PC-9 (cell line): ENCODE measurements at regions of chr1 and their contacts with region 1.

Region 1: GRCh38 chr1:68074472-68074871 is 24.0 kb upstream of the DIRAS3 start:
- DNase-seq: no peak
- H3K4me3 ChIP-seq: no peak overlapping the region
- H3K27ac ChIP-seq: no peak overlapping the region
- H3K4me1 ChIP-seq: no peaks in the 10 kb centered on the region
- H3K27me3 ChIP-seq: no peaks in the 10 kb centered on the region
- CTCF ChIP-seq: no peak

Region 2: DNA sequence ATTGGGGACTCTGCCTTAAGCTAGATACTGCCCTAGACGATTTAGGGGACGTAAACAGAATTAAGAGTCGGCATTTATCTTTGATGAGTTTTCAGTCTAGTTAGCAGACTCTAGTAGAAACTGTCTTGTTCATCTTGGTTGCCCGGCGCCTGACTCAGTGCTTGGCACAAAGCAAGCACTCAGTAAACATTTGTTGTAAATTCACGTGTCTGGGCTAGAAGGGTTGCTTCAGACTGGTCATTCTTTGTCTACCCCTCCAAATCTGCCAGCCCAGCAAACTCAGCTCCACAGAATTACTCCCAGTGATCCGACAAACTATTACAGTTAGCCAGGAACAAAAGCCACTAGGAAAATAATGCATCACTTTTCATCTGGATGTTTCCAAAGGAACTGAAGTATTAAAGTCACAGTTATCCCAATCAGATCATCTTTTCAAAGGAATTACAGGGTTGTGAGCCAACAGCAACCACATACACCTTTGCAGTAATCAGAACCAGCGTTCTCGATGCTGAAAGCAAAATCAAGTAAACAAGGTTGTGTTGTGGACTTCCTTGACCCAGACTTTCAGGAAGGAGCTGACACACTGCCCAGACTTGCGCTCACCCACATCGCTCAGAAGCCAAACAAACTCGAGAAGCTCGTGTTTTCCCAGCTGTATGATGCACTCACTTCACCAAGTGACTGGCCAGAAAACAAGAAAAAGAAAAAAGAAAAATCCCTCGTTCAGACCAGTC is 456.0 kb before region 1 on chr1:
- CTCF ChIA-PET with region 1: no interaction called
- POLR2A ChIA-PET with region 1: no interaction called
- intact Hi-C with region 1: no loop called
- DNase-seq: no peak
- H3K4me3 ChIP-seq: no peak overlapping the region
- H3K27ac ChIP-seq: no peak overlapping the region
- H3K4me1 ChIP-seq: peaks cover 15% of the 10 kb centered on the region
- H3K27me3 ChIP-seq: no peaks in the 10 kb centered on the region
- CTCF ChIP-seq: no peak

Region 3: GRCh38 chr1:67921725-67922489 is 152.6 kb before region 1 on chr1:
- CTCF ChIA-PET with region 1: no interaction called
- POLR2A ChIA-PET with region 1: interaction called, 10 read pairs
- intact Hi-C with region 1: no loop called
- DNase-seq: no peak
- H3K4me3 ChIP-seq: no peak overlapping the region
- H3K27ac ChIP-seq: no peak overlapping the region
- H3K4me1 ChIP-seq: no peaks in the 10 kb centered on the region
- H3K27me3 ChIP-seq: no peaks in the 10 kb centered on the region
- CTCF ChIP-seq: no peak

Region 4: GRCh38 chr1:68016381-68016780 is 58.1 kb before region 1 on chr1:
- CTCF ChIA-PET with region 1: no interaction called
- POLR2A ChIA-PET with region 1: no interaction called
- intact Hi-C with region 1: no loop called
- DNase-seq: no peak
- H3K4me3 ChIP-seq: no peak overlapping the region
- H3K27ac ChIP-seq: no peak overlapping the region
- H3K4me1 ChIP-seq: no peaks in the 10 kb centered on the region
- H3K27me3 ChIP-seq: no peaks in the 10 kb centered on the region
- CTCF ChIP-seq: no peak

Region 5: DNA sequence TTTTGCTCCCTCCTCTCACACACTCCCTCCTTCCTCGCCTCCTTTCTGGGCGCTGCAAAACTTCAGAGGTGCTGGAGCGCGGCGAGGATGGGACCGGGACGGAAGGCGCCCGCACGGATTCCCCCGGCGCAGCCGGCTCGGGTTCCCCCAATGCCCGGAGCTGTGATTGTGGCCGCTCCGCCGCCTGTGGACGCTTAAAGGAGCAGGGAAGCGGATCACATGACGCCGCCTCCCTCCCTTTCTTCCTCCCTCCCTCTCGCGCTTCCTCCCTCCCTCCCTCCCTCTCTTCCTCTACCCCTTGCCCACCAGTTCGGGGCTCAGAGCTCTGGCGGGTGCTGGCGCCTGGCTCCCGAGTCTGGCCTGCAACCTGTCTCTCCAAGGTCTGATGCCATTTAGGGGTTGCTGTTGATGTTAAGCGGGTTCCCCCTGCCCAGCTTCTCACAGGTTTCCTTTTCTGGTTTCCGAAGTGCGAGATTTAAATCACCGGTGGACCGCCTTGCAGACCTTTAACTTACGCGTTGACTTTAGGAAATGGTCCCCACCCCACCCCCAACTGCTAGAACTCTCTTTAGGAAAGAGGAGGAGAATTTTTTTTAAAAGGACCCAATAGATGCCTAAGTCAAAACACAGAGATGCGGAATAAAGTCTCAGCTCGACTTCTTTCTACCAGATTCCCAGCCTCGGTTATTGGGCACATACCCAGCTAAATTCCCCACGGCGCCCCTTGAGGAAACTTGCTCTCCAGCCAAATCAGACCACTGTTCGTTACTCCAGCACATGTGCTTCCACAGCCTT is 158.1 kb after region 1 on chr1 and contains the start of gene WLS:
- CTCF ChIA-PET with region 1: no interaction called
- POLR2A ChIA-PET with region 1: no interaction called
- intact Hi-C with region 1: no loop called
- DNase-seq: peak in 1 of 2 experiments; percentile 59
- H3K4me3 ChIP-seq: peak within 1 kb of the TSS; percentile 61
- H3K27ac ChIP-seq: no peak within 1 kb of the TSS
- H3K4me1 ChIP-seq: peaks cover 6% of the 10 kb centered on the region; the same call in 1 of the 2 replicates
- H3K27me3 ChIP-seq: peaks cover 4% of the 10 kb centered on the region
- CTCF ChIP-seq: no peak; the same call in 1 of the 2 replicates
- total RNA-seq, gene WLS: 19.8 and 30.5 TPM in 2 replicates